Kidney (tissue), 22 donors: ENCODE measurements at regions of chr18 and their contacts with region 1.

Region 1: GRCh38 chr18:58781627-58782194 is 83.0 kb upstream of the ZNF532 start:
- DNase-seq: peak; percentile 86 to 94 (median 89)
- H3K4me3 ChIP-seq: no peak overlapping the region
- H3K27ac ChIP-seq: no peak overlapping the region
- H3K4me1 ChIP-seq: peaks cover 0 to 9% (median 0%) of the 10 kb centered on the region in 3 donors
- H3K27me3 ChIP-seq: no peaks in the 10 kb centered on the region
- CTCF ChIP-seq: peak; percentile 93

Region 2: GRCh38 chr18:59056706-59057492 is 275.2 kb after region 1 on chr18:
- intact Hi-C with region 1: loop called (anchors 5 kb)
- DNase-seq: peak; percentile 85 to 89 (median 87)
- H3K4me3 ChIP-seq: no peak overlapping the region
- H3K27ac ChIP-seq: no peak overlapping the region
- H3K4me1 ChIP-seq: peaks cover 4 to 7% (median 4%) of the 10 kb centered on the region in 3 donors
- H3K27me3 ChIP-seq: no peaks in the 10 kb centered on the region
- CTCF ChIP-seq: peak; percentile 90

Region 3: GRCh38 chr18:59070181-59070912 is 288.6 kb after region 1 on chr18:
- intact Hi-C with region 1: loop called (anchors 5 kb)
- DNase-seq: peak; percentile 87 to 94 (median 90)
- H3K4me3 ChIP-seq: no peak overlapping the region
- H3K27ac ChIP-seq: no peak overlapping the region
- H3K4me1 ChIP-seq: peaks cover 0 to 3% (median 0%) of the 10 kb centered on the region in 3 donors
- H3K27me3 ChIP-seq: no peaks in the 10 kb centered on the region
- CTCF ChIP-seq: peak; percentile 89